Stomach (tissue), 19 donors: ENCODE measurements at regions of chr16 and their contacts with region 1.

Region 1: GRCh38 chr16:28879841-28880588 is 1.7 kb downstream of the ATP2A1 start:
- DNase-seq: peak; percentile 89 to 95
- H3K4me3 ChIP-seq: peak overlapping the region; percentile 64 to 87 (median 69)
- H3K27ac ChIP-seq: peak overlapping the region in 3 of 5 donors; percentile 36 to 62 (median 41)
- H3K4me1 ChIP-seq: peaks cover 14 to 20% (median 18%) of the 10 kb centered on the region in 4 donors
- H3K27me3 ChIP-seq: peaks cover 0 to 44% (median 10%) of the 10 kb centered on the region in 3 donors
- CTCF ChIP-seq: peak in 3 of 7 experiments; percentile 10 to 43 (median 11)
- EP300 ChIP-seq: no peak
- POLR2A ChIP-seq: no peak

Region 2: GRCh38 chr16:28835867-28836744 is 43.9 kb before region 1 on chr16:
- intact Hi-C with region 1: loop called (anchors 10 kb)
- DNase-seq: no peak
- H3K4me3 ChIP-seq: no peak overlapping the region
- H3K27ac ChIP-seq: no peak overlapping the region
- H3K4me1 ChIP-seq: no peaks in the 10 kb centered on the region
- H3K27me3 ChIP-seq: no peaks in the 10 kb centered on the region
- CTCF ChIP-seq: no peak
- EP300 ChIP-seq: no peak
- POLR2A ChIP-seq: no peak

Region 3: DNA sequence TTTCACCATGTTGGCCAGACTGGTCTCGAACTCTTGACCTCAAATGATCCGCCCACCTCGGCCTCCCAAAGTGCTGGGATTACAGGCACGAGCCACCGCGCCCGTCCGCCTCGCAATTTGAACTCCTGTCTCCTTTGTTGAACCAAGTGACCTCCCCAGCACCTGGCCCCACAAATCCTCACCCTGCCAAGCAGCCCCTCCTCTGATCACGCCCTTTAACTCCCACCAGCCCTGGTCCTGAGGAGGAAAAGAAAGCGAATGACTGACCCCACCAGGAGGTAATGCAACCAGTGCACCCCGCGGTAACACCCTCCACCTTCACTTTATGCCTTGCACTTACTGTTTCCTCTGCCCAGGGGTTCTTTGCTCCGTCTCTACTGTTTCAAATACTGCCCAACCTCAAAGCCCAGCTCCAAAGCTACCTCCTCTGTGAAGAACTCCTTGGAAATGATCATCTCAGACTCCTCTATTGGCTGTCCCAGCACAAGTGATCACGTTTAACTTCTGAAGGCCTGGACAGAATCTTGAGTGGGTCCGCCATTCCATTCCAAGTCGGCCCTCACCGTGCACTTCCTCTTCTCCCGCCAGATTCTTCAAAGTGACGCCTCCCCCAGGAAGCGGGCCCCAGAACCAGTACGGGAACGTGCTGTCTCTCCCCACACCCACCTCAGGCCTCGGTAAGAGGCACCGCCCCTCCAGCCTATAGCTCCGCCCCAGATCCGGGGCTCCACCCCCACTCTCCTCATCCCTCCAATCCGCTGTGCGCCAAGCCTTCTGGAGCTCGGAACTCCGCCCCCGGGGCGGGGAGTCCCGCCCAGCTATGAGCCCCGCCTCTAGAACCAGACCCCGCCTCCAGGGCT is 56.1 kb after region 1 on chr16:
- intact Hi-C with region 1: loop called (anchors 10 kb)
- DNase-seq: peak; percentile 88 to 91
- H3K4me3 ChIP-seq: peak overlapping the region; percentile 23 to 39 (median 28)
- H3K27ac ChIP-seq: no peak overlapping the region
- H3K4me1 ChIP-seq: peaks cover 4 to 19% (median 12%) of the 10 kb centered on the region in 4 donors
- H3K27me3 ChIP-seq: no peaks in the 10 kb centered on the region
- CTCF ChIP-seq: no peak
- EP300 ChIP-seq: no peak
- POLR2A ChIP-seq: no peak